GM10248 (cell line): ENCODE measurements at regions of chr9 and their contacts with region 1.

Region 1: DNA sequence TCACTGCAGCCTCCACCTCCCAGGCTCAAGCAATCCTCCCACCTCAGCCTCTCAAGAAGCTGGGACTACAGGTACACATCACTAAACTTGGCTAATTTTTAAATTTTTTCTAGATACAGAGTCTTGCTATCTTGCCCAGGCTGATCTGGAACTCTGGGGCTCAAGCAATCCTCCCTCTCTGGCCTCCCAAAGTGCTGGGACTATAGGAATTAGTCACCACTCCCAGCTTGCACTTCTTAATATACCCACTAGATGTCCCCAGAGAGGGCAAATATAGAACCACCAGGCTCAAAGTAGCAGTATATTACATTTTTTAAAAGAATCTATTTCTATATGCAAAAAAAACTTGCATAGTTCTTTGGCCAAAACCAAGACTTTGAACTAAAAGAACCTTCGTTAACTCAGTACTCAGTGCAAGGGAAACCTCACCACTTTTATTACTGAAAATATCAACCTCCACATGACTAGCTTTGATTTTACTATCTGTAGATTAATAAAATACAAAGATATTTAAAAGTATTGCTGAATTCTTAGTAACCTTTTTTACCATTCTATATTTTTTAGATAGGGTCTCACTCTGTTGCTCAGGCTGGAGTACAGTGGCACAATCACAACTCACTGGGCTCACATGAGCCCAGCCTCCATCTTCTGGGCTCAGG is 25.8 kb upstream of the HSD17B3 start:
- DNase-seq: peak; percentile 62
- CTCF ChIP-seq: peak; percentile 73

Region 2: DNA sequence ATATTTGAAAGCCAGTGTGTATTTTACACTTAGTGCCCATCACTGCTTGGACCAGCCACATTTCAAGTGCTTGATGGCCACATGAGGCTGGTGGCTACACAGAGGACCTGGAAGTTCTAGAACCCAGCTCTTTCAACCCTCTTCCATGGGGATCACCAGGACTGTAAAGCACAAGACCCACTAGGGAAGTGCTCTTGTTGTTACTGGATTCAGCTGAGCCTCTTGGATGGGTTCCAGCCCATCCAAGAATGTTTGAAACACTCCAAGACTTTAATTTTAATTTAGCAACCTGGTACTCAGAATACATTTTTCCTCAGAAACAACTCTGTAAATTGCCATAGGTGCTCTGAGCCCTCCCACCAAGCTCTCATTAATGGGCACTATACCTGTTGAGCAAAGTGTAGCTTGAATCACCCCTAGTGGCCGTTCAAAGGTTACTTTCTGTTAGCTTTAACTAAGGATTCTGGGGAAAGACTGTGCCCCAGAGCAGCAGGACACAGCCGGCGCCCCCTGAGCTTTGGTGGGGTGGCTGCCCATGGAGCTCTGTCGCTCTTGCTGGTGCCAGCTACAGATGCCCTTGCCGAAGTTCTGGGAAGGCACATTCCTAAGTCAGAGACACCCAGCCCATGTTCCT is 238.3 kb before region 1 on chr9:
- CTCF ChIA-PET with region 1: no interaction called
- POLR2A ChIA-PET with region 1: no interaction called
- DNase-seq: no peak
- CTCF ChIP-seq: no peak

Region 3: DNA sequence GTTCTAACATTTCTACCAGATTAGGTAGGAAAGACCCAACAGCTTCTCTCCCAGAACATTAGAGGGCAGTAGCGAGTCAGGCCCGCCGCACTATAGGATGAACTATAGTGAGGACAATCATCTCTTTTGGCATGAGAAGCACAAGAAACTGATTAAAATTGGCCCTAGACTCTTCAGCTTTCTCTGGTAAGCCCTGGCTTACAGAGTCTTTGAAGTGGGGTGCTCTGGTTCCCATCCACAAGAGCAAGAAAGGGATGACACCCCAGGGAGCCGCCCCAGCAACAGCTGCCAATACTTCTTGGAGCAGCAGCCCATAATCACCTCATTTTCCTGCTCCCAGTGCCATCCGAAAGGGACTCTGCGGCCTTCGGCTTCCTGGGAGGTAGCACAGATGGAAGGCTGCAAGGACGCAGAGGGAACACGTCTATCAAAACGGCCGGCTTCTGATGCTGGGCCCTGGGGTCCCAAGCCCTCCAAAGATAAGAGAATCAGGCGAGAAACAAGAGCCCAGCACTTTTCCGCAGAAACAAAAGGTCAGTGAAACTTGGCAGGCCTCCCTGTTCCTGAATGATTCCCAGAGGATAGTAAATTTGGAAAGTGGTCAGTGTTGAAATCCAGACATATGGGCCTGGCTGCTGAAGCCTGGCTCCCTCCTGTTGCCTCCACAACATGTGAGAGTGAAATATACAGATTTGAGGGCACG is 95.1 kb before region 1 on chr9:
- CTCF ChIA-PET with region 1: interaction called, 20 read pairs
- POLR2A ChIA-PET with region 1: no interaction called
- DNase-seq: peak; percentile 65
- CTCF ChIP-seq: peak; percentile 70

Region 4: GRCh38 chr9:96245399-96245798 is 82.4 kb before region 1 on chr9:
- CTCF ChIA-PET with region 1: no interaction called
- POLR2A ChIA-PET with region 1: no interaction called
- DNase-seq: no peak
- CTCF ChIP-seq: no peak

Region 5: DNA sequence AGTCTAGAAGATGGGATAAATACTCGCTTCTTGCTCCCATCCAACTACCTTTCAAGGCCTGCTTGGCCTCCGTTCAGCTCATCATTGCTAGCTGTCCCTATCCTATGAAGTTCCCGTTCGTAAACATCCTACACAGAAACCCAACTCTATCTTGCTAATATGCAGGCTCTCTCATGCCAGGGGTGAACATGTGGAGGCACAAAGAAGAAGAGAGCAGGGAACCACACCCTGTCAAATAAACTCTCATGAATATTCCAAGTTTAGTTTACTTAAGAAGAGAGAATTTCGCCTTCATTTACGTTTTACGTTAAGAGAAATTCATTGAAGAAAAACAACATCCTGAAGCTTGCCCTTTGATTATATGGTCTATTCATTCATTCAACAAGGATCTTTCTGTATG is 18.0 kb before region 1 on chr9:
- CTCF ChIA-PET with region 1: interaction called, 46 read pairs
- POLR2A ChIA-PET with region 1: no interaction called
- DNase-seq: no peak
- CTCF ChIP-seq: no peak

Region 6: DNA sequence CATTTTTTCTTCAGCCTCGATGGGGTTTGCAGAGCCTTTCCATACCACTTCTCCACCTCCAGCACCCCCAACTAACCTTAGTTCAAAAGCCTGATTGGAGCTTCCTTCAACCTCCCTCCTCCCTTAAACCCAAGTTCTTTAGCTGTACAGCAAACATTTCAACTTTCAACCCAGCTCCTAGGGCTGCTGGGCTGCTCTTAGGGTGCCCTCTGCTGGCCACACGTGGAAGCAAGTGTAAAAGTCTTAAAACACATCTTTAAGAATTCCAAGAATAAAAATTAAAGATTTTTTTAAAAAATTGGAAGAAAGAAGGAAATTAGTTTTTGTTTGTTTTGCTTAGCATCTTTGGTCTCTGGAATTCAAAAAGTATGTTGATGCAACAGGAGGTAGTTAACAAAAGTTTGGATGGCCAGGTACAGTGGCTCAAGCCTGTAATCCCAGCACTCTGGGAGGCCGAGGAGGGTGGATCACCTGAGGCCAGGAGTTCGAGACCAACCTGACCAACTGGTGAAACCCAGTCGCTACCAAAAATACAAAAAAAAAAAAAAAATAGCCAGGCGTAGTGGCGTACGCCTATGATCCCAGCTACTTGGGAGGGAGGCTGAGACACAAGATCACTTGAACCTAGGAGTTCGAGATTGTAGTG is 10.4 kb before region 1 on chr9:
- CTCF ChIA-PET with region 1: interaction called, 46 read pairs
- POLR2A ChIA-PET with region 1: no interaction called
- DNase-seq: peak; percentile 60
- CTCF ChIP-seq: peak; percentile 62

Region 7: DNA sequence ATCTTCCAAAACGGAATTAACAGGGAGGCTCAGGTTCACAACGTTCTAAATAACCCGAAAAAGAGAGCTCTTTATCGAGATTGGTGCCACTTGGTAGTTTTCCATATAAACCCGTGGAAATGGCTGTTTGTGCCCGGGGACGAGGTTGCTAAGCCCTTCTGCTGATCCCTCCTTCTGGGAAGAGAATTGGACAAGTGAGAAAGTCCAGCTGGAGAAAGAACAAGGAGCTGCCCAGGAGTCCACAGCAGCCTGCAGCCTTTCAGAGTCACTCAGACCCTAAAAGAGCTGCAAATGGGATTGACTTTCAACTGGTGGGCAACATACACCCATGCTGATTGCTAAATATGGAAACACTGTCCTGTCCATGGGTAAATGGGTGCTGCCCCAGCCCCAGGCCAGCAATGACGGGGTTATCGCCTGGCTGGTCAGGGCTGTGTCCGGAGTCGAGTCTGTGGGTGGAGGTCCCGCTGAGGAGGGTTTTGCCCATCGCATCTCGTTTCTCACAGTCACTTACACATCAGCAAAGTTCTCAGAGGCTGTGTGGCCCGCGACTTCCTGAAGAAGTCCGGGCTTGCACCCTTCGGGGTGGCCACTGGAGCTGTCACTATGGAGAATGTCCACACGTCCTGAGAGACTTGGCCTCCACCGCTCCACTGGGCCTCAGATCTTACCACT is 14.9 kb after region 1 on chr9:
- CTCF ChIA-PET with region 1: interaction called, 10 read pairs
- POLR2A ChIA-PET with region 1: no interaction called
- DNase-seq: no peak
- CTCF ChIP-seq: no peak

Region 8: DNA sequence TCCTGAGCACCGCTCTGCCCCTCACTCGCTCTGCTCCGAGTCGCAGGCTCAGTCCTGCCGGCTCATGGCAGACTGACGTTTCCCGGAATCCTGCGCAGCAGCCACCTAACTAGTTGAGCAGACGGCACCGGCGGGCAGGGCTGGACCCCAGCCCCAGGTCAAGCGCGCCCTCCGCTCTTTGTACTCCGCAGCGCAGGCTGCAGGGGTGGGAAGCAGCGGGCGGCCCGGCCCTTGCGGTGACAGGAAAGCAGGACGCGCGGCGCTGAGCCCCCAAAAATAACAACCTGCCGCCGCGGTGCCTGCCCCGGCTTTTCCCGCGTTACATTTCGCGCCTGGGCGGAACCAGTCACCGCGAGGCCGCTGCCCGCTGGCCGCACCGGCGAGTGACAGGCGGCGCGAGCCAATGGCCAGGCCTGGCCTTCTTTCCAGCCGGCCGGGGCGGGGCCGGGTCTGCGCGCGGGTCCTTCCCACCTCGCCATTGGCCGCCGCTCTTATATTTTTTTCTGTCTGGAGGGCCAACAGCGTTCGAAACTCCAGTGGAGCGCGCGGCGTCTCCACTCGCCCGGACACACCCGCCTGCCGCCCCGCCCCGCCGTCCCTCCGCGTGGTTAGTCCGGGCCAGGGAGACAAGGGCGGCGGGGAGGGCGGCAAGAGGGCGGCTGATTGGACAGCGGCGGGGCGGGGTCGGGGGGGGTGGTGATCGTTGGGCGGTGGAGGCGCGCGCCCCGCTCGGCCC is 90.4 kb after region 1 on chr9 and contains the start of gene ZNF367:
- CTCF ChIA-PET with region 1: no interaction called
- POLR2A ChIA-PET with region 1: no interaction called
- DNase-seq: peak; percentile 93
- CTCF ChIP-seq: no peak

Region 9: GRCh38 chr9:96663506-96664120 is 335.8 kb after region 1 on chr9:
- CTCF ChIA-PET with region 1: interaction called, 34 read pairs
- POLR2A ChIA-PET with region 1: no interaction called
- DNase-seq: no peak
- CTCF ChIP-seq: no peak